Naive thymus-derived CD4-positive, alpha-beta T cell (primary cell): ENCODE measurements at regions of chr14 and their contacts with region 1.

Region 1: DNA sequence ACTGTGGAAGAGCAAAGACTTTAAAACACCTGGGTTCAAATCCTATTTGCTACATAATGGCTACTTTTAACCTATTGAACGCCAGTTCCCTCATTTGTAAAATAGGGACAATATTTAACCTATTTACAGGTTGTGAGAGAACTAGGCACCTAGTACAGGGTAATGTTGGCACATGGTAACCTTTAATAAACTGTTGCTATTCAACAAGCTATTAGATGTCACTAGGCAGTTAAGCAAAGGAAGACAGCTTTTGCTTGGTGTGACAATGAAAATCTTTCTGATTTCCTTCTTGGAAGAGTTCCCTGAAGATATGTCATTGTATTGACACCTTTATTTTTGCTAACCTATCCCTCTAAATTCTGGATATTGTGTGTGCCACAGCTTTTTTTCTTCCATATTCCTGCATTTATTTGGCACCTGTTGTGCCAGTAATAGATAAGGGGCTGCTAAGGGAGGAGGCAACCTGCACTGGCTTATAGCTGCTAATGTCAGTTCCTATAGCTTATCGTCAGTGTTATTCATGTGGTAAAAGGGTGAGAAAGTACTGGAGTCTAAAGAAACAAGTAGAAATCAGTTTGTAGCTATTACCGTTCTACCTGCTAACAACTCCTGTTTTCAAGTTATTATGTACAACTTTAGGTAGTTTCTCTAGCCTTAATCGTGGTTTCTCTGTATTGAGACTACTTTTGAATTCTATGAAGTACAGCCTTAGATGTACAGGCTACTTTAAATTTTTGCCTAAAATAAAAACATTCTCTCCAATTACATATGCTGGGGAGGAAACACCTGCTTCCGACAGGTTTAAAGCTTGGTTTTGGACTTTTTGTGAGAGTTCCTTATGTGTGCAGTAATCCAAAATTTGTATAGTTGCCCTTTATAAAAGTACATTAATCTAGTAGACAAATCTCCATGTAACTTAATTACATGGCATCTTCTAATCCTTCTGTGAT is 24.3 kb downstream of the HIF1A start:
- DNase-seq: peak in 7 of 9 donors; percentile 16 to 61 (median 36)
- ATAC-seq: peak; percentile 85
- H3K4me3 ChIP-seq: peak overlapping the region; percentile 6
- H3K4me3 Mint-ChIP-seq: peak overlapping the region; percentile 5 to 80 (median 72)
- H3K27ac ChIP-seq: peak overlapping the region; percentile 56
- H3K27ac Mint-ChIP-seq: peak overlapping the region; percentile 28 to 90 (median 80)
- H3K4me1 ChIP-seq: peaks cover 23 to 35% of the 10 kb centered on the region in 2 donors
- H3K4me1 Mint-ChIP-seq: peaks cover 33 to 91% (median 81%) of the 10 kb centered on the region in 7 donors
- H3K27me3 ChIP-seq: no peaks in the 10 kb centered on the region
- H3K27me3 Mint-ChIP-seq: no peaks in the 10 kb centered on the region

Region 2: DNA sequence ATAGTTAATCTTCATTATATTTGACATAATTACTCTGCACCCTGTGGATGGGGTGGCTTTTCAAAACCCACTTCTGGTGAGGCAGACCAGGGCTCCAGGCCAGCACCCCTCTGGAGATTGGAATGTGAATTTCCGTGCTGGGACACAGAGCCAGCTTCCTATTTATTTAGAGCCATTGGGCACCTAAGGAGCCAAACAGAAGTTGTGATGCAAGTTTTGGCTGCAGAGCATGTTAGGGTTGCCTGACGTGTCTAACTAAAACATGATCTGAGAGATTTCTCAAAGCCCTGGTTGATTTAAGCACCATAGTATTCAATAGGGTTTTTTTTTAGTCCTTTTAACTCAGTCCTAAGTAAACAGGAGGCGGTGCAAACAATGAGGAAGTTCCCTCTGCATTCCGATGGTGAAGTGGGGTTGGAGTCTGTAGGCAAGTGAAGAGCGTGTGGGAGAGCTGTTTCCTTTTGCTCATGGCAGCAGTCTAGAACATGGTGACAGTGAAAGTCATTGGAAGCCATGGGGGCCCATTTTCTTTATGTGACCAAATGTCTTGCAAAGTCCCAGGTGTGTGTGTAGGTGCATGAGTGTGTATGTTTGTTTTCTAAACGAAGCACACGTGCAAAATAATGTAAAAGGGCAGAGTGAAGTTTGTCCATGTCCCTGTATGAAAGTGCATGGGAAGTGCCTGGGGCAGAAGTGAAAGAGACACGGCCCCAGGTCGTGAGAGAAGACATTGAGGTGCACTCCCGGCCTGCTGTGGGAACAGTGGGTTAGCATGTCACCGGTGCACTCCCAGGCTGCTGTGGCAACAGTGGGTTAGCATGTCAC is 280.5 kb before region 1 on chr14:
- CTCF ChIA-PET with region 1: no interaction called
- POLR2A ChIA-PET with region 1: no interaction called
- intact Hi-C with region 1: no loop called
- DNase-seq: peak in 7 of 9 donors; percentile 23 to 53 (median 31)
- ATAC-seq: peak; percentile 75
- H3K4me3 ChIP-seq: peak overlapping the region; percentile 45
- H3K4me3 Mint-ChIP-seq: peak overlapping the region; percentile 76 to 88 (median 85)
- H3K27ac ChIP-seq: peak overlapping the region; percentile 64
- H3K27ac Mint-ChIP-seq: peak overlapping the region in 7 of 9 donors; percentile 77 to 96 (median 88)
- H3K4me1 ChIP-seq: peaks cover 74 to 89% of the 10 kb centered on the region in 2 donors
- H3K4me1 Mint-ChIP-seq: peaks cover 58 to 96% (median 90%) of the 10 kb centered on the region in 7 donors
- H3K27me3 ChIP-seq: no peaks in the 10 kb centered on the region
- H3K27me3 Mint-ChIP-seq: no peaks in the 10 kb centered on the region

Region 3: DNA sequence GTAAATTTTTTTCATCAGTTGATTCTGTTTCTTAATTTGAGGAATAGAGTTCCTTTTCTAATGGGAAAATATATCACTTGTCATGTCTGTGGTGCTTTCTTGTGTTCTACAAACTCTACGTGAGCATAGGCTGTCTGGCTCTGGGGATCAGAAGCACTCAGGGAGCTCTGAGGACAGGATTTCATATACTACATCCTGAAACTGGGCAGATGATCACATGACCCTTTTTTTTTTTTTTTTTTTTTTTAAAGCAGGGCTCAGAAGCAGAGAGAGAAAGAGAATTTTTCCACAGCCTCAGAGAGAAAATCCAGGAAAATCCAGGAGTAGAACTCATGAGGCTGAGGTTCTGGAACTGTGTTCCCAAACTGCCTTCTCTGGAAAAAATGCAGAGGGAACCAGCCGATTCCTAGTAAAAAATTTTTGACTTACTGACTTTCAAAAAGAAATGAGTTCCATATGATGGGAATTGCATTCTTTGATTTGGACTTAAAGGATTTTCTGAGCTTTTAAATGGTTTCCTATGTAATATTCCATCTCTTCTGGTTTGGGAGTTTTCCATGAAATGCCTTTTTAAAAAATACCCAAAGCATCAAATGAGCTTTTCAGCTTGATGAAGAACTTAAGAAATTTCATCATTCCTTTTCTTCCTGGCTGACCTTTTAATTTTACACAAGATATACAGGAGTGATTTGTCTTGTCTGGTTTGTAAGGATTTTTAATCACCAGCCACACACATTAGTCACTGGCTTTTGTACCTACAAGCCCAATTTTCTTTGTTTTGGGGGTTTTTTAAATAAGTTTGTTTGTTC is 207.4 kb before region 1 on chr14:
- CTCF ChIA-PET with region 1: interaction called, 10 read pairs
- POLR2A ChIA-PET with region 1: no interaction called
- intact Hi-C with region 1: no loop called
- DNase-seq: no peak
- ATAC-seq: no peak
- H3K4me3 ChIP-seq: no peak overlapping the region
- H3K4me3 Mint-ChIP-seq: peak overlapping the region in 9 of 10 donors; percentile 37 to 74 (median 55)
- H3K27ac ChIP-seq: peak overlapping the region; percentile 52
- H3K27ac Mint-ChIP-seq: peak overlapping the region in 7 of 9 donors; percentile 68 to 95 (median 84)
- H3K4me1 ChIP-seq: peaks cover 37 to 46% of the 10 kb centered on the region in 2 donors
- H3K4me1 Mint-ChIP-seq: peaks cover 47 to 100% (median 95%) of the 10 kb centered on the region in 7 donors
- H3K27me3 ChIP-seq: no peaks in the 10 kb centered on the region
- H3K27me3 Mint-ChIP-seq: no peaks in the 10 kb centered on the region

Region 4: GRCh38 chr14:61568572-61569131 is 151.0 kb before region 1 on chr14:
- CTCF ChIA-PET with region 1: interaction called, 5 read pairs
- POLR2A ChIA-PET with region 1: interaction called, 4 read pairs
- intact Hi-C with region 1: loop called in 1 of 2 experiments (anchors 5 kb)
- DNase-seq: peak; percentile 49 to 77 (median 73)
- ATAC-seq: peak; percentile 86
- H3K4me3 ChIP-seq: peak overlapping the region; percentile 47
- H3K4me3 Mint-ChIP-seq: peak overlapping the region; percentile 74 to 89 (median 82)
- H3K27ac ChIP-seq: peak overlapping the region; percentile 26
- H3K27ac Mint-ChIP-seq: peak overlapping the region; percentile 44 to 95 (median 86)
- H3K4me1 ChIP-seq: peaks cover 0 to 34% of the 10 kb centered on the region in 2 donors
- H3K4me1 Mint-ChIP-seq: peaks cover 40 to 77% (median 57%) of the 10 kb centered on the region in 7 donors
- H3K27me3 ChIP-seq: no peaks in the 10 kb centered on the region
- H3K27me3 Mint-ChIP-seq: peaks cover 0 to 10% (median 0%) of the 10 kb centered on the region in 5 donors

Region 5: GRCh38 chr14:61671082-61671481 is 48.5 kb before region 1 on chr14:
- CTCF ChIA-PET with region 1: no interaction called
- POLR2A ChIA-PET with region 1: interaction called, 5 read pairs
- intact Hi-C with region 1: loop called in 1 of 2 experiments (anchors 2 kb)
- DNase-seq: peak in 7 of 9 donors; percentile 67 to 87 (median 82)
- ATAC-seq: peak; percentile 97
- H3K4me3 ChIP-seq: peak overlapping the region; percentile 24
- H3K4me3 Mint-ChIP-seq: peak overlapping the region in 1 of 10 donors; percentile 68
- H3K27ac ChIP-seq: peak overlapping the region; percentile 85
- H3K27ac Mint-ChIP-seq: no peak overlapping the region
- H3K4me1 ChIP-seq: peaks cover 29 to 66% of the 10 kb centered on the region in 2 donors
- H3K4me1 Mint-ChIP-seq: peaks cover 5 to 23% (median 18%) of the 10 kb centered on the region in 7 donors
- H3K27me3 ChIP-seq: no peaks in the 10 kb centered on the region
- H3K27me3 Mint-ChIP-seq: no peaks in the 10 kb centered on the region